HCT116 (cell line): ENCODE measurements at regions of chr11 and their contacts with region 1.

Region 1: DNA sequence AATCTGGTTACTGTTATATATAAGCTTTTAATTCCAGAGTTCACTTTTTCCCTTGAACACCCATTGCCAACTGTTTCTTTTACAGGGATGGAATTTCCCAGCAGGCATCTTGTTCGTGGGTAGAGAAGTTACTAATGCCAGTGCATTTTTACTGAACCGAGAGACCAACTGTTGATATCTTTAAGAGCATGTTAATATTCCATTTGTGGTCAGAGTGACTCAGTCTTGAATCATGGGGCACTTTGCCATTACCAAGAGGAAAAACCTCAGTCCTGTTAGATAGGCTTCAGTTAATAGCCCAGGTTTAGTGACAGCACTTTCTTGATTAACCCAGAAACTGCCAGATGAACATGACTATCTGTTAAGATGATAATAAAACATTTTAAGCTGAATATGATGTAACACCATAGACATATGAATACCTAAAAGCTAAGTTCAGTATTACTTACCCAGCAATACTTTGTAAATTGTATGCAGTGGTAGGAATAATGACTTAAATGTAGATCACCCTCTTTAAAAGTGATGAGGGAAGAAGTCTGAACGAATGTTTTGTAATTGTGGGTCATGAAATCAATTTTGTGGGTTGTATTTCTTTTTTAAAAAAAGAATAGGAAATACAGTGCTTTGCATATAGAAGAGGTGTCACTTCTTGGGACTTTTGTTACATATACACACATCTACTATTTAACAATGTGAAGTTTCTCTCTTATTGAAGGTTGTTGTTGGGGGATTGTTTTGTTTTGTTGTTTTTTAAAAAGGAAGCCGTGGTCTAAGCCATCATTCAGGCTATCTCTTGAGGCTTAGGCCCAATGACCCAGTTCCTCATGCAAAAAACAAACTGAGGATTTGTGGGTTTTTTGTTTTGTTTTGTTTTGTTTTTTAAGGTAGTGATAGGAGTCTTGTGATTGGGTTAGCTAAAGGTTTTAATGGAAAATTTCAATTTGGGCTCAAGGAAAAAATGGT is 79.2 kb upstream of the GRIK4 start:
- DNase-seq: peak; percentile 97
- ATAC-seq: peak; percentile 92
- H3K4me3 ChIP-seq: peak overlapping the region; percentile 2 to 18
- H3K27ac ChIP-seq: peak overlapping the region; percentile 84
- H3K4me1 ChIP-seq: peaks cover 24 to 35% of the 10 kb centered on the region in 2 experiments
- H3K27me3 ChIP-seq: no peaks in the 10 kb centered on the region
- CTCF ChIP-seq: 0 out of 6 replicates have a peak, but pooled peaks of 1 of the 3 experiments have one; percentile 4
- POLR2A ChIP-seq: no peak
- RAD21 ChIP-seq: peak; percentile 52

Region 2: GRCh38 chr11:120197251-120197891 is 235.0 kb before region 1 on chr11:
- CTCF ChIA-PET with region 1: no interaction called
- POLR2A ChIA-PET with region 1: no interaction called
- RAD21 ChIA-PET with region 1: no interaction called
- intact Hi-C with region 1: no loop called
- DNase-seq: no peak
- ATAC-seq: no peak
- H3K4me3 ChIP-seq: no peak overlapping the region
- H3K27ac ChIP-seq: no peak overlapping the region
- H3K4me1 ChIP-seq: peaks cover 0 to 12% of the 10 kb centered on the region in 2 experiments; a peak in 1 of 4 replicates
- H3K27me3 ChIP-seq: no peaks in the 10 kb centered on the region
- CTCF ChIP-seq: no peak
- POLR2A ChIP-seq: no peak
- RAD21 ChIP-seq: no peak

Region 3: GRCh38 chr11:120335908-120336640 is 96.3 kb before region 1 on chr11 and contains the start of gene ARHGEF12:
- CTCF ChIA-PET with region 1: interaction called, 3 read pairs
- POLR2A ChIA-PET with region 1: no interaction called
- RAD21 ChIA-PET with region 1: no interaction called
- intact Hi-C with region 1: loop called (anchors 2 kb)
- DNase-seq: peak; percentile 93
- ATAC-seq: peak; percentile 77
- H3K4me3 ChIP-seq: peak within 1 kb of the TSS; percentile 77 to 87
- H3K27ac ChIP-seq: peak within 1 kb of the TSS; percentile 91
- H3K4me1 ChIP-seq: peaks cover 58 to 76% of the 10 kb centered on the region in 2 experiments
- H3K27me3 ChIP-seq: no peaks in the 10 kb centered on the region
- CTCF ChIP-seq: peak; percentile 21 to 51 (median 49); a peak in 4 of 6 replicates
- POLR2A ChIP-seq: peak; percentile 60
- RAD21 ChIP-seq: peak; percentile 43
- total RNA-seq, gene ARHGEF12: 81.4 TPM

Region 4: DNA sequence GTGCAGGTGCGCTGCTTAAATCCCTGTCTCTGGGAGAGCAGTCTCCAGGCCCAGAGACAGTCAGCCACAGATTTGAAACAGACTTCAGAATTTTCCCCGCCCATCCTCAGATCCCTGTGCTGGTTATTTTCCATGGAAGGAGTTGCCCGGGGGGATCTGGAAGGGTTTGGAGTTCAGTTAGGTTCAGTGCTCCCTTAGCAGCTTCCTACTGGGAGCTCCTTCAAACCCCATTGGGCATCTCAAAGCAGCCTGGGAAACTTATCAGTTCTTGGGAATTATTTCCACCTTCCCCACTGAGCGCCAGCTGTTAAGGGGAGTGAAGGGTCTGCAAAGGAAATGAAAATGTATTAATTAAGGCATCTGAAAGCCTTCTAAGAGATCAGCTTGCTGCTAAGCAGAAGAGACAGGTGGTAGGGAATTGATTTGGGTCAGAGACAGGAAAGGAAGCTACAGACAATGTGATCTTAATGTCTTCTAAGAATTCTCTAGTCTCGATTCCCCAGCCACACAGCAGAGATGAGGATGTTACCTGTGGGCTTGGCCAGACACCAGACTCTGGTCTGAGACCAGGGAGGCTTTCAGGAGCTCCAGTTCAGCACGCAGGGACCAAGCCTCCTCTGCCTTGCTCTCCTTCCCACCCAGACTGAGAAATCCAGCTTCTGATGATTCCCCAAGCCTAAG is 485.4 kb after region 1 on chr11:
- CTCF ChIA-PET with region 1: no interaction called
- POLR2A ChIA-PET with region 1: no interaction called
- RAD21 ChIA-PET with region 1: no interaction called
- intact Hi-C with region 1: no loop called
- DNase-seq: no peak
- ATAC-seq: no peak
- H3K4me3 ChIP-seq: no peak overlapping the region
- H3K27ac ChIP-seq: no peak overlapping the region
- H3K4me1 ChIP-seq: no peaks in the 10 kb centered on the region
- H3K27me3 ChIP-seq: peaks cover 17% of the 10 kb centered on the region
- CTCF ChIP-seq: no peak
- POLR2A ChIP-seq: no peak
- RAD21 ChIP-seq: no peak